ENCODE measurements at regions of chr2 and their contacts with region 1.

Region 1: DNA sequence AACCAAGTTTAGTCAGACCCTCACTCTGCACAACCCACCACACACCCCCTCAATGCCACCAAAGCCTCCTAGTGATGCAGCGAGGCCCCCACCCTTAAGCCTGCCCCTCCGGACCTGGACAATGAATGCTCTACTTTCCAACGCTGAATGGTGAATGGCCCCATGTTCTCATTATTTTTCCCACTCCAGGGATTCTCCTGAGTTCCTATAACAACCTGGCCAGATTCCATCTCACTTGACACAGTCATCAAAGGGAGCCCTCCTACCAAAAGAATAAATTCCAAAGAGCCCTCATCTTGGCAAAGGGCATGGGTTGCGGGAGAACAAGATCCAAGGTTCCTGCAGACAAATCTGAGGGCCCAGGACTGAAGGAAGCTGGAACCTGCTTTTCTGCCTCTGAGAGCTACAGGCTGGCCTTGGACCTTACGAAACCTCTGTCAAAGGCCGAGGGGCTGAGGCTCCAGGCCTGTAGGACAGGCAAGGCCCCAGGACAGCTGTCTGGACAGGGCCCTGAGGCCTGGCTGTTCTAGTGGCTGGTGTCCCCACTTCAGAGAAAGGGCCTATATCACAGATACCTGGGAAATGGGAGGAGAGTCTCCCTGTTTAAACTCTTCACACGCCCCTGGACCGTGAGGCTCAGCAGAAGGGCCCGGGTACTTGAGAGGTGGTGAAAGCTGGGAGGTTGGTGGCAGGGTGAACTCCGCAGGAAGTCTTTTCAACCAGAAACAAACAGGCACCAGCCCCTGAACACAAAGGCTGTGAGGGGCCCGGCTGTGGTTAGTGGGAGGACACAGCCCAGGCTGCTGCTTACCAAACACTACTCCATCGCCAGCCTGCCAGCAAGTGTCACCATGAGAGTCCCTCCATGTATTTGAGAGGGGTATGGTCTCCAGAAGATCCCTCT is 27.3 kb downstream of the SFXN5 start:
- DNase-seq: no peak
- H3K4me3 ChIP-seq: no peak overlapping the region
- H3K27ac ChIP-seq: no peak overlapping the region
- H3K4me1 ChIP-seq: no peaks in the 10 kb centered on the region
- H3K27me3 ChIP-seq: no peaks in the 10 kb centered on the region
- CTCF ChIP-seq: no peak
- POLR2A ChIP-seq: no peak

Region 2: GRCh38 chr2:73006969-73007710 is 37.0 kb before region 1 on chr2:
- intact Hi-C with region 1: loop called (anchors 1 kb)
- DNase-seq: peak in 1 of 2 donors; percentile 34
- H3K4me3 ChIP-seq: no peak overlapping the region
- H3K27ac ChIP-seq: no peak overlapping the region
- H3K4me1 ChIP-seq: no peaks in the 10 kb centered on the region
- H3K27me3 ChIP-seq: no peaks in the 10 kb centered on the region
- CTCF ChIP-seq: no peak
- POLR2A ChIP-seq: no peak

Measured in breast epithelium (tissue), 4 donors.